CD4-positive, alpha-beta memory T cell (primary cell): ENCODE measurements at regions of chr1 and their contacts with region 1.

Region 1: GRCh38 chr1:173867753-173868265 is at the start of gene GAS5:
- DNase-seq: peak; percentile 98 to 100 (median 99)
- H3K4me3 ChIP-seq: peak within 1 kb of the TSS; percentile 71 to 79
- H3K4me3 Mint-ChIP-seq: peak within 1 kb of the TSS; percentile 95 to 99 (median 96)
- H3K27ac ChIP-seq: peak within 1 kb of the TSS; percentile 89
- H3K27ac Mint-ChIP-seq: peak within 1 kb of the TSS; percentile 94 to 99 (median 97)
- H3K4me1 ChIP-seq: peaks cover 84% of the 10 kb centered on the region
- H3K4me1 Mint-ChIP-seq: peaks cover 52 to 92% (median 63%) of the 10 kb centered on the region in 4 donors
- H3K27me3 ChIP-seq: no peaks in the 10 kb centered on the region
- H3K27me3 Mint-ChIP-seq: no peaks in the 10 kb centered on the region
- total RNA-seq, gene GAS5: 676 to 709 TPM

Region 2: GRCh38 chr1:173714759-173715537 is 152.9 kb before region 1 on chr1 and contains the start of gene KLHL20:
- CTCF ChIA-PET with region 1: no interaction called
- POLR2A ChIA-PET with region 1: interaction called, 56 read pairs
- intact Hi-C with region 1: loop called (anchors 1 kb)
- DNase-seq: peak; percentile 89 to 93 (median 91)
- H3K4me3 ChIP-seq: peak within 1 kb of the TSS; percentile 47 to 73
- H3K4me3 Mint-ChIP-seq: peak within 1 kb of the TSS; percentile 95 to 100 (median 97)
- H3K27ac ChIP-seq: peak within 1 kb of the TSS; percentile 78
- H3K27ac Mint-ChIP-seq: peak within 1 kb of the TSS; percentile 92 to 98 (median 97)
- H3K4me1 ChIP-seq: peaks cover 34% of the 10 kb centered on the region
- H3K4me1 Mint-ChIP-seq: peaks cover 18 to 33% (median 25%) of the 10 kb centered on the region in 4 donors
- H3K27me3 ChIP-seq: peaks cover 5% of the 10 kb centered on the region
- H3K27me3 Mint-ChIP-seq: peaks cover 14 to 15% of the 10 kb centered on the region in 2 donors
- total RNA-seq, gene KLHL20: 41.0 to 43.9 TPM

Region 3: GRCh38 chr1:173853074-173853473 is 14.7 kb before region 1 on chr1:
- CTCF ChIA-PET with region 1: interaction called, 3 read pairs
- POLR2A ChIA-PET with region 1: interaction called, 56 read pairs
- intact Hi-C with region 1: no loop called
- DNase-seq: no peak
- H3K4me3 ChIP-seq: no peak overlapping the region
- H3K4me3 Mint-ChIP-seq: no peak overlapping the region
- H3K27ac ChIP-seq: no peak overlapping the region
- H3K27ac Mint-ChIP-seq: peak overlapping the region in 2 of 7 donors; percentile 50 to 52
- H3K4me1 ChIP-seq: no peaks in the 10 kb centered on the region
- H3K4me1 Mint-ChIP-seq: peaks cover 0 to 4% (median 0%) of the 10 kb centered on the region in 4 donors
- H3K27me3 ChIP-seq: no peaks in the 10 kb centered on the region
- H3K27me3 Mint-ChIP-seq: no peaks in the 10 kb centered on the region

Region 4: GRCh38 chr1:174159252-174160108 is 291.7 kb after region 1 on chr1 and contains the start of gene RABGAP1L:
- CTCF ChIA-PET with region 1: no interaction called
- POLR2A ChIA-PET with region 1: interaction called, 6 read pairs
- intact Hi-C with region 1: loop called (anchors 1 kb)
- DNase-seq: peak; percentile 91 to 96 (median 95)
- H3K4me3 ChIP-seq: peak within 1 kb of the TSS; percentile 88 to 95
- H3K4me3 Mint-ChIP-seq: peak within 1 kb of the TSS; percentile 94 to 99 (median 97)
- H3K27ac ChIP-seq: peak within 1 kb of the TSS; percentile 92
- H3K27ac Mint-ChIP-seq: peak within 1 kb of the TSS; percentile 92 to 99 (median 98)
- H3K4me1 ChIP-seq: peaks cover 56% of the 10 kb centered on the region
- H3K4me1 Mint-ChIP-seq: peaks cover 40 to 67% (median 52%) of the 10 kb centered on the region in 4 donors
- H3K27me3 ChIP-seq: no peaks in the 10 kb centered on the region
- H3K27me3 Mint-ChIP-seq: no peaks in the 10 kb centered on the region
- total RNA-seq, gene RABGAP1L: 113 to 114 TPM

Region 5: DNA sequence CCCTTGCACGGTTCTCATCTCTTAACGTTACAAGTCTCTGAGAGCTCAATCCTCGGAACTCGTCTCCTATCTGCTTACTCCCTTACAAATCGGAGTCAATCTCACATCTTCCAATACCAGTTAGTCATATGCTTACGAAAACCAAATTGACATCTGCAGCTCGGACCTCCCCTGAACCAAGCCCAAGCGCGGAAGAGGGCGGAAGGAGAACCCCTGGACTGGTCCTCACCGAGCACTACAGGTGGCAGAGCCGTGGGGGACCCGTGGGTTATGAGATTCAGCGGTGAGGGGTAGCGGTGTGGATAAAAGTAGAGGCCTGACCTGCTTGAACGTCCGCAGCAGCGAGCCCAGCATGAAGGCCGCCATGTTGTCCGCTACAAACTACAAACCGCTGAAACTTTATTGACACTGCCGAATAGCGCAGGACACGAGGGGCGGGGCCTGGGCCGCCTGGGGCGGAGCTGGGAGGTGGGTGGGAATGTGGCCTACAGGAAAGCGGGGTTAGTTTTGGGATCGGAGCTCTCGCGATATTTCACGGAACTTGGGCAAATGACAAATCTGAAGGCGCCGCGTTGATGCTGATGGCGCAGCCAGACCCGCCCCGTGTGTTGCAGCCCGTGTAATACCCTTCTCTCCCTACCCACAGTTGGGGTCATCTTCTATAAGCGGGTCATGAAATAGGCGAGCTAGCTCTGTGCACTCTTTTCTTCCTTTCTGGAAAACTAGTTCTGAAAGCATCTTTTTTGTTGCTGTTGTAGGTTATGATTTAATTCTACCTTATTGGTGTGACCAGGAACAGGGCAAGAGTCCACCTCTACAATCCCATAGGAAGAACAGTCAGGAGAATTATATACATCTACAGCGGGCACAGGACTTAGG is 1155.5 kb after region 1 on chr1 and contains the start of gene MRPS14:
- CTCF ChIA-PET with region 1: no interaction called
- POLR2A ChIA-PET with region 1: interaction called, 16 read pairs
- intact Hi-C with region 1: loop called (anchors 5 kb)
- DNase-seq: peak; percentile 95 to 98 (median 97)
- H3K4me3 ChIP-seq: peak within 1 kb of the TSS; percentile 79 to 97
- H3K4me3 Mint-ChIP-seq: peak within 1 kb of the TSS; percentile 90 to 98 (median 93)
- H3K27ac ChIP-seq: peak within 1 kb of the TSS; percentile 94
- H3K27ac Mint-ChIP-seq: peak within 1 kb of the TSS; percentile 86 to 97 (median 97)
- H3K4me1 ChIP-seq: peaks cover 25% of the 10 kb centered on the region
- H3K4me1 Mint-ChIP-seq: peaks cover 24 to 43% (median 28%) of the 10 kb centered on the region in 4 donors
- H3K27me3 ChIP-seq: no peaks in the 10 kb centered on the region
- H3K27me3 Mint-ChIP-seq: no peaks in the 10 kb centered on the region
- total RNA-seq, gene MRPS14: 39.3 to 40.6 TPM